CD4-positive, alpha-beta memory T cell (primary cell): ENCODE measurements at regions of chr2 and their contacts with region 1.

Region 1: GRCh38 chr2:203453858-203454451 is 81.1 kb downstream of the RAPH1 start:
- DNase-seq: peak; percentile 33 to 44 (median 35)
- H3K4me3 ChIP-seq: no peak overlapping the region
- H3K4me3 Mint-ChIP-seq: no peak overlapping the region
- H3K27ac ChIP-seq: no peak overlapping the region
- H3K27ac Mint-ChIP-seq: no peak overlapping the region
- H3K4me1 ChIP-seq: no peaks in the 10 kb centered on the region
- H3K4me1 Mint-ChIP-seq: no peaks in the 10 kb centered on the region
- H3K27me3 ChIP-seq: no peaks in the 10 kb centered on the region
- H3K27me3 Mint-ChIP-seq: no peaks in the 10 kb centered on the region

Region 2: GRCh38 chr2:202831242-202832220 is 622.4 kb before region 1 on chr2:
- CTCF ChIA-PET with region 1: no interaction called
- POLR2A ChIA-PET with region 1: no interaction called
- intact Hi-C with region 1: loop called (anchors 5 kb)
- DNase-seq: peak; percentile 46 to 54 (median 48)
- H3K4me3 ChIP-seq: no peak overlapping the region
- H3K4me3 Mint-ChIP-seq: peak overlapping the region in 4 of 8 donors; percentile 30 to 71 (median 38)
- H3K27ac ChIP-seq: no peak overlapping the region
- H3K27ac Mint-ChIP-seq: peak overlapping the region in 5 of 7 donors; percentile 26 to 91 (median 42)
- H3K4me1 ChIP-seq: peaks cover 9% of the 10 kb centered on the region
- H3K4me1 Mint-ChIP-seq: peaks cover 9 to 11% (median 9%) of the 10 kb centered on the region in 4 donors
- H3K27me3 ChIP-seq: no peaks in the 10 kb centered on the region
- H3K27me3 Mint-ChIP-seq: no peaks in the 10 kb centered on the region

Region 3: GRCh38 chr2:203002054-203002821 is 451.7 kb before region 1 on chr2:
- CTCF ChIA-PET with region 1: no interaction called
- POLR2A ChIA-PET with region 1: no interaction called
- intact Hi-C with region 1: no loop called
- DNase-seq: no peak
- H3K4me3 ChIP-seq: no peak overlapping the region
- H3K4me3 Mint-ChIP-seq: no peak overlapping the region
- H3K27ac ChIP-seq: no peak overlapping the region
- H3K27ac Mint-ChIP-seq: no peak overlapping the region
- H3K4me1 ChIP-seq: no peaks in the 10 kb centered on the region
- H3K4me1 Mint-ChIP-seq: no peaks in the 10 kb centered on the region
- H3K27me3 ChIP-seq: no peaks in the 10 kb centered on the region
- H3K27me3 Mint-ChIP-seq: peaks cover under 1 to 4% of the 10 kb centered on the region in 2 donors

Region 4: DNA sequence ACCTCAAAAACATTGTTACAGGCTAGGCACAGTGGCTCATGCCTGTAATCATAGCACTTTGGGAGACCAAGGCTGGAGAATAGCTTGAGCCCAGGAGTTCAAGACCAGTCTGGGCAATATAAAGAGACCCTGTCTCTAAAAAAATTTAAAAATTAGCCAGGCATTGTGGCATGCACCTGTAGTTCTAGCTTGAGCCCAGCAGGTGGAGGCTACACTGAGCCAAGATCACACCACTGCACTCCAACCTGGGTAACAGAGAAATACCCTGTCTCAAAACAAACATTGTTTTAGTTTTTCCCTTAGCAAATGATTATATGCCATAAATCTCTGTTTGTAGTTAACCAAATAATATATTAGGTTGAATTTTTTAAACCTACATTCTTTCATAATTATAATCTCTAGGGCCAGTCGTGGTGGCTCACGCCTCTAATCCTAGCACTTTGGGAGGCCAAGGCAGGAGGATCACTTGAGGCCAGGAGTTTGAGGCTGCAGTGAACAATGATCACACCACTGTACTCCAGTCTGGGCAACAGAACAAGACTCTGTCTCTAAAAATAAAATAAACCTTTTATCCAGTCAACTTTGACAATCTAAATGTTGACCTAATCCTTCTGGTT is 228.4 kb before region 1 on chr2:
- CTCF ChIA-PET with region 1: interaction called, 13 read pairs
- POLR2A ChIA-PET with region 1: no interaction called
- intact Hi-C with region 1: loop called (anchors 1 kb)
- DNase-seq: peak in 4 of 5 donors; percentile 20 to 37 (median 28)
- H3K4me3 ChIP-seq: no peak overlapping the region
- H3K4me3 Mint-ChIP-seq: no peak overlapping the region
- H3K27ac ChIP-seq: no peak overlapping the region
- H3K27ac Mint-ChIP-seq: no peak overlapping the region
- H3K4me1 ChIP-seq: no peaks in the 10 kb centered on the region
- H3K4me1 Mint-ChIP-seq: no peaks in the 10 kb centered on the region
- H3K27me3 ChIP-seq: no peaks in the 10 kb centered on the region
- H3K27me3 Mint-ChIP-seq: no peaks in the 10 kb centered on the region

Region 5: DNA sequence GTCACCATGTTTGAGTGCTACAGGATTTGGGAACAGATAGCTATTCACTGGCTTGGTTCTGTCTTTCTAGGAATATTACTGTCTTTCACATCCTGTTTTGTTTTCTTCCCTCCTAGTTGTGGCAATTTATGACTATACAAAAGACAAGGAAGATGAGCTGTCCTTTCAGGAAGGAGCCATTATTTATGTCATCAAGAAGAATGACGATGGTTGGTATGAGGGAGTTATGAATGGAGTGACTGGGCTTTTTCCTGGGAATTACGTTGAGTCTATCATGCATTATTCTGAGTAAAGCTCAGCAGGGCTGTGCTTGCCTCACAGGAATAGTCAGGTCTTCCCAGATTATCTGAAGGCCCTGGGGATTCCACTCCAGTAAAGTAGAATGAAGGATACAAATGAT is 26.9 kb before region 1 on chr2:
- CTCF ChIA-PET with region 1: interaction called, 12 read pairs
- POLR2A ChIA-PET with region 1: no interaction called
- intact Hi-C with region 1: no loop called
- DNase-seq: no peak
- H3K4me3 ChIP-seq: no peak overlapping the region
- H3K4me3 Mint-ChIP-seq: no peak overlapping the region
- H3K27ac ChIP-seq: no peak overlapping the region
- H3K27ac Mint-ChIP-seq: no peak overlapping the region
- H3K4me1 ChIP-seq: no peaks in the 10 kb centered on the region
- H3K4me1 Mint-ChIP-seq: no peaks in the 10 kb centered on the region
- H3K27me3 ChIP-seq: no peaks in the 10 kb centered on the region
- H3K27me3 Mint-ChIP-seq: no peaks in the 10 kb centered on the region